Activated CD8-positive, alpha-beta T cell treated with anti-CD3 and anti-CD28 coated beads for 36 hours (primary cell): ENCODE measurements at regions of chr22 and their contacts with region 1.

Region 1: DNA sequence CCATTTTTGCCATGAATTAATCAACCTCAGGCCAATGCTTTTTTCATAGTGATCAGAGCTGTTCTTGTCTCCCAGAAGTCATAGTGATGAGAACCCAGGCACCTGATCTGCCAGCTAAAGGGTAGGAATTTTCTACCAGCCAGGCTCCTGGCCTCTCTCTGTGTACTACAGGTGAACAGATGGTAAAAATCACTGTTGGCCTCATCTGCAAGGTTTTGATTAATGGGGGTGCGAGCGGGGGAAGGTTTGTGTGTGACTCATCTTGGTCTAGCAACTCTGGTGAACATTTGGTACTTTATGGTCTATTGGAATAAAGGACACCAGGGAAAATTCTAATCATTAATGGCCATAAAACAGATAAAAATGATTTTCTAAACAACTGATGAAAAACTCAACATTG is 14.4 kb upstream of the APOL4 start:
- DNase-seq: no peak
- ATAC-seq: no peak
- H3K4me3 Mint-ChIP-seq: no peak overlapping the region
- H3K27ac Mint-ChIP-seq: no peak overlapping the region
- H3K4me1 Mint-ChIP-seq: peaks cover 3% of the 10 kb centered on the region
- H3K27me3 Mint-ChIP-seq: peaks cover 13% of the 10 kb centered on the region
- CTCF ChIP-seq: no peak

Region 2: GRCh38 chr22:36086170-36086490 is 129.9 kb before region 1 on chr22:
- CTCF ChIA-PET with region 1: no interaction called
- POLR2A ChIA-PET with region 1: no interaction called
- intact Hi-C with region 1: no loop called
- DNase-seq: no peak
- ATAC-seq: no peak
- H3K4me3 Mint-ChIP-seq: no peak overlapping the region
- H3K27ac Mint-ChIP-seq: no peak overlapping the region
- H3K4me1 Mint-ChIP-seq: no peaks in the 10 kb centered on the region
- H3K27me3 Mint-ChIP-seq: no peaks in the 10 kb centered on the region
- CTCF ChIP-seq: no peak

Region 3: GRCh38 chr22:36194971-36195370 is 21.0 kb before region 1 on chr22:
- CTCF ChIA-PET with region 1: interaction called, 17 read pairs
- POLR2A ChIA-PET with region 1: interaction called, 6 read pairs
- intact Hi-C with region 1: no loop called
- DNase-seq: peak; percentile 70
- ATAC-seq: peak; percentile 65
- H3K4me3 Mint-ChIP-seq: no peak overlapping the region
- H3K27ac Mint-ChIP-seq: no peak overlapping the region
- H3K4me1 Mint-ChIP-seq: peaks cover 27% of the 10 kb centered on the region
- H3K27me3 Mint-ChIP-seq: no peaks in the 10 kb centered on the region
- CTCF ChIP-seq: peak; percentile 76

Region 4: DNA sequence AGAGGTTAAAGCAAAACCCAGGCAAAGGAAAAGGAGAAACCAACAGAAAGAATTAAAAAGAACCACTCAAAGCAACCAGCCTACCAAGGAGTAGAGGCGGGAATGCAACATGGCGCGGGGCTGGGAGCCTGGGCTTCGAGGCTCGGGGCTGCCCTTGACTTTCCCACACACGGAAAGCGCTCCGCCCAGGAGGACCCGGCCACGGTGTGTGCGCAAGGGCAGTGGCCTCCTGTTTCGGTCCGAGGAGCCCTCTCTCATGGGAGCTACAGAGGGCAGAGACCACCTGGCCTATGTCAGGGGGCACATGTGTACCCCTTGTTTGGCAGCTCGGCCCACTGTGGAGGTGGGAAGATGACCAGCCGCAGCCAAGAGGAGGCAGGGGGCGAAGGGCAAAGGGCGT is 92.9 kb after region 1 on chr22:
- CTCF ChIA-PET with region 1: no interaction called
- POLR2A ChIA-PET with region 1: no interaction called
- intact Hi-C with region 1: no loop called
- DNase-seq: no peak
- ATAC-seq: no peak
- H3K4me3 Mint-ChIP-seq: no peak overlapping the region
- H3K27ac Mint-ChIP-seq: peak overlapping the region; percentile 48
- H3K4me1 Mint-ChIP-seq: peaks cover 2% of the 10 kb centered on the region
- H3K27me3 Mint-ChIP-seq: no peaks in the 10 kb centered on the region
- CTCF ChIP-seq: no peak